ENCODE measurements at regions of chr9 and their contacts with region 1.

Region 1: GRCh38 chr9:18208154-18209059 is 265.5 kb upstream of the ADAMTSL1 start:
- DNase-seq: peak; percentile 25
- ATAC-seq: peak; percentile 13

Region 2: DNA sequence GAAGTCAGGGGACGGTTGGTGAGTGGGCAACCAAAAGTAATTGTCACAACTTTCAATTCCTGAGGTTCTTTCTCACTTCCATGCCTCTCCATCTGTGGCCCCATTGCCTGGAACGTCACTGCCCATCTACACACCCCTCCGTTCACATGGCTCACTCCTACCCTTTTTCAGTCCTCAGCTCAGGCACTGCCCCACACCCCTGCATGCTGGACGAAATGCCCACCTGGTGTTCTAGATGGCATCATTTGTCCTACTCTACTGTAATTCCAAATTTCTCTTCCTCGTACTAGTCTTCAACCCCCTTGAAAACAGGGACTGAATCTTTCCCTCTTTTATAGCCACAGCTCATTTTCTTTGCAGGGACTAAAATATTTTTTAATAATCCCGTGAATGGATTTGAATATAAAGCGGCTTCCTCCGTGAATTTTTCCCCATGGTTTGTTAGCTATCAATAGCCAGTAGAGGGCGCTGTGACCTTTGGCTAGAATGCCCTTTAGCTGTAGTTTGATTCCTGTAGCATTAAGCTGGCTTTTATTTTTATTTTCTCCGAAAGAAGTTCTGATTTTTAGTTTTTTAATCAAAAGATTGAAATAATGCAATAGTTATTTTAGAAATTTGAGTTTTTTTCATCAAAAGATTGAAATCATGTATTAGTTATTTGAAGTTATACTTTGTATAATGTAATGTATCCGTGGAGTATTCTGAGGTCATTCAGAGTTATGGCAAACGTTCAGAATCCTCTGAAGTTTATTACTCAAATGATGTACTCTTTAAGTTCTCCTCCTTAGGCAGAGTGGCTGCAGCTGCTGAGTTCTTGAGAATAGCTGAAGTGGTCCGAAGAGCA is 397.5 kb before region 1 on chr9:
- intact Hi-C with region 1: loop called (anchors 5 kb)
- DNase-seq: no peak
- ATAC-seq: peak; percentile 39

Region 3: DNA sequence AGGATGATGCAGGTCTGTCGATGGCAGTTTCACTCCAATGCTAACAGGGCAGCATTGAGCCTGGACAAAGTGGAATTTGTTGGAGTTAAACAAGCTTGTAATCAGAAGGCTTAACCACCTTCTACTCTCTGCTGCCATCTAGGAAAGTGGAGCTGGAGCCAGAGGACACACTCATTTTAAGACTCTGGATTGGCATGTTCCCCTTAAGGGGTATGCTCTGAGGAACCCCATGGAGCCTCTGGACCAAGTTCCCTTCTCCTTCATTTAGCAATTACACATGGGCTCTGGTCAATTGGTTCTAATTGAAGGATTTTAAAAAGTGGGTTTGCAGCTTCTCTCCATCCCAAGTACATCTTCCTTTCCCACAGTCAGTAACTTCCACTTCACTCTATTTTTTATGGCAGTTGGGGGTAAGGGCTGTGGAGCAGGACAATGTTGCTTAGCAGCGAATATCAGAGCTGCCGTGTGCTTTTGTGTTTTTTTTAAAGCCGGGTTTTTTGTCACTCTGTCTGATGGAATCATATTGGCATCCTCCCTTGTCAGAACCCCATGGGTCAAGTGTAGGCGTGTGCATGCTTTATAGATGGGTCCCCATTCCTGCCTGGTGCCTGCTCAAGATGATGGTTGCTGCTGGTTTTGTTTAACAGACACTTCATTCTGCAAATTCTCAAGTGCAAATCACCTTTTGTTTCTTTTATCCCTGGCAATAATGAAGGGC is 65.2 kb before region 1 on chr9:
- intact Hi-C with region 1: loop called (anchors 10 kb)
- DNase-seq: no peak
- ATAC-seq: no peak

Region 4: DNA sequence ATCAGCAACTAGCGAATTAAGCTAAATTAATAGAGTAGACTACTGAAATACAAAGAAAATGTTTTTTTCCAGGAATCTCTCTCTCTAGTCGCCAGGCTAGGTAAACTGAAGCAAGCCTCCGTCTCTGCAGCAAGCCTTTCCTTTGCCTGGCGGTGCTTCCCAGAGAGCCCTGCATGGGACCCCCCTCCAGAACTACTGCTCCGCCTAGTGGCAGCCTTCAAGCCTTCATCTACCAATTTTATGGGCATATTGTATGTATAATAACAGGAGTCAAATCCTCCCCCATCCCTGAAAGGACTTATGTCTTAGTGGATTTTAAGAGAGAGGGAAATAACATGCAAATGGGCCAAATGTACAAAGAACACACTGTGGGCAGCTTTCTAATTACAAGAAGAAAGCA is 582.7 kb after region 1 on chr9:
- intact Hi-C with region 1: no loop called
- DNase-seq: no peak
- ATAC-seq: no peak